Caco-2 (cell line): ENCODE measurements at regions of chr3 and their contacts with region 1.

Region 1: GRCh38 chr3:50235716-50236496 is at the start of gene GNAI2:
- DNase-seq: peak; percentile 98 to 99
- H3K4me3 ChIP-seq: peak within 1 kb of the TSS; percentile 52
- H3K4me3 Mint-ChIP-seq: peak within 1 kb of the TSS; percentile 94
- H3K27ac Mint-ChIP-seq: peak within 1 kb of the TSS; percentile 82
- H3K4me1 ChIP-seq: peaks cover 23% of the 10 kb centered on the region
- H3K4me1 Mint-ChIP-seq: peaks cover 13% of the 10 kb centered on the region
- H3K27me3 ChIP-seq: no peaks in the 10 kb centered on the region
- H3K27me3 Mint-ChIP-seq: no peaks in the 10 kb centered on the region
- CTCF ChIP-seq: no peak
- total RNA-seq, gene GNAI2: 59.3 and 62.0 TPM in 2 replicates

Region 2: GRCh38 chr3:49826016-49826415 is 409.9 kb before region 1 on chr3:
- CTCF ChIA-PET with region 1: no interaction called
- POLR2A ChIA-PET with region 1: no interaction called
- intact Hi-C with region 1: no loop called
- DNase-seq: no peak
- H3K4me3 ChIP-seq: no peak overlapping the region
- H3K4me3 Mint-ChIP-seq: no peak overlapping the region
- H3K27ac Mint-ChIP-seq: no peak overlapping the region
- H3K4me1 ChIP-seq: no peaks in the 10 kb centered on the region
- H3K4me1 Mint-ChIP-seq: no peaks in the 10 kb centered on the region
- H3K27me3 ChIP-seq: no peaks in the 10 kb centered on the region
- H3K27me3 Mint-ChIP-seq: no peaks in the 10 kb centered on the region
- CTCF ChIP-seq: no peak

Region 3: GRCh38 chr3:50245831-50246516 is 10.1 kb after region 1 on chr3:
- CTCF ChIA-PET with region 1: interaction called, 30 read pairs
- POLR2A ChIA-PET with region 1: interaction called, 4 read pairs
- intact Hi-C with region 1: no loop called
- DNase-seq: peak; percentile 81 to 90
- H3K4me3 ChIP-seq: no peak overlapping the region
- H3K4me3 Mint-ChIP-seq: no peak overlapping the region
- H3K27ac Mint-ChIP-seq: peak overlapping the region; percentile 55
- H3K4me1 ChIP-seq: peaks cover 8% of the 10 kb centered on the region
- H3K4me1 Mint-ChIP-seq: no peaks in the 10 kb centered on the region
- H3K27me3 ChIP-seq: no peaks in the 10 kb centered on the region
- H3K27me3 Mint-ChIP-seq: no peaks in the 10 kb centered on the region
- CTCF ChIP-seq: peak; percentile 87 to 97